Activated B cell treated with CpG ODN at 0.5 μM for 24 hours (primary cell): ENCODE measurements at regions of chr16 and their contacts with region 1.

Region 1: DNA sequence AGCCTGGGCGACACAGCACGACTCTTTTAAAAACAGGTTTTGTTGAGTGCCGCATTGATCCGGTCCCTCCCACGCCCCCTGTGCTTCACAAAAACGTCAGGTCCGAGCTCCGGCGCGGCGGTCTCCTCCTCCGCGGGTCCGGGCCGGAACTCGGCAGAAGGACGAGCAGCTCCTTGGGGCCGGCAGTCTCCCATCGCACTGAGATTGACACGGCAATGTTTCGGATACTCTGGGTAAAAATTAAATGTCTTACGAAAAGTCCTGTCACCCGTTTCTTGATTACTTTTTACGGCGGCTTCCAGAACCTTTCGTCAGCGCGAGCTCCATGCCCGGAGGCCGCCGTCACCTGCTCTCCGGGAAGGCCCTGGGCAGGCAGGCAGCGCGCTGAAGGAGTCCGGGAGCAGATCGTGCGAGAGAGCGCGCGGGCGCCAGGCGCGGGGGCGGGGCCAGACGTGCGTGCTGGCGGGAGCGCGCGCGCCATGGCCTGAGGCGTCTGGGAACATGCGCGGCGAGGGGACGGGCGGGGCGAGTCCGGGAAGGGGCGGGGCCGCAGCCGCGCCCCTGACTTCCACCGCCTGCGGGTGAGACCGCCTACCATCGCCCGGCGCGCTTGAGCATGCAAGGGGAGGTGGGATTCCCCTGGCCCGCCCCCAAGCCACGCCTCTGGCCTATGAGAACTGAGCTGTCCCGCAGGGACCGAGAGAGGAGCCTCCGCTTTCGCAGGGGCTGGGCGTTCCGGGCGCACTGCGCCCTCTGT is 11.7 kb upstream of the SRL start:
- DNase-seq: peak; percentile 98
- ATAC-seq: peak; percentile 96
- H3K4me3 Mint-ChIP-seq: peak overlapping the region; percentile 96
- H3K27ac Mint-ChIP-seq: peak overlapping the region; percentile 97
- H3K4me1 Mint-ChIP-seq: peaks cover 6% of the 10 kb centered on the region
- H3K27me3 Mint-ChIP-seq: no peaks in the 10 kb centered on the region
- CTCF ChIP-seq: no peak

Region 2: DNA sequence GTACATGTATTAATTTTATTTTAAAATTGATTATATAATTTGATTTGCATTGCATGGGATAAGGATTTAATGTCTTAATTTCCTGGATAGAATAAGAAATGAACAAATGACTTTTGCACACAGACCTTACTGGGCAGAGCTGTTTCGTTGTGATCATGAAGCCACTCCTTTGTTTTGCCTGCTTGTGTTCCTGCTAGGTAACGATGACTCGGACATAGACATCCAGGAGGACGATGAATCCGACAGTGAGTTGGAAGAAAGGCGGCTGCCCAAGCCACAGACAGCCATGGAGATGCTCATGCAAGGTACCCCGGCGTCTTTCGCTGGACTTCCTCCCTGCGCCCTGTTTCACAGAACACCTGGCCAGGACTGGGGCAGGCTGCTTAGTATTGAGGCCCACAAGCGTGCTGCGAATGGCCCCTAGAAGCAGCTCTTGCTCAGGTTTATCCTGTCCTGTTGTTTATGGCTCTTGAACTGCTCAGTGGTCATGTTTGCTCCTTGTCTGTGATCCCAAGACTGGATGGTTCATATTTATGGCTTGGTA is 723.1 kb before region 1 on chr16:
- CTCF ChIA-PET with region 1: interaction called, 7 read pairs
- POLR2A ChIA-PET with region 1: no interaction called
- intact Hi-C with region 1: loop called (anchors 2 kb)
- DNase-seq: no peak
- ATAC-seq: no peak
- H3K4me3 Mint-ChIP-seq: no peak overlapping the region
- H3K27ac Mint-ChIP-seq: no peak overlapping the region
- H3K4me1 Mint-ChIP-seq: peaks cover 21% of the 10 kb centered on the region
- H3K27me3 Mint-ChIP-seq: no peaks in the 10 kb centered on the region
- CTCF ChIP-seq: no peak

Region 3: DNA sequence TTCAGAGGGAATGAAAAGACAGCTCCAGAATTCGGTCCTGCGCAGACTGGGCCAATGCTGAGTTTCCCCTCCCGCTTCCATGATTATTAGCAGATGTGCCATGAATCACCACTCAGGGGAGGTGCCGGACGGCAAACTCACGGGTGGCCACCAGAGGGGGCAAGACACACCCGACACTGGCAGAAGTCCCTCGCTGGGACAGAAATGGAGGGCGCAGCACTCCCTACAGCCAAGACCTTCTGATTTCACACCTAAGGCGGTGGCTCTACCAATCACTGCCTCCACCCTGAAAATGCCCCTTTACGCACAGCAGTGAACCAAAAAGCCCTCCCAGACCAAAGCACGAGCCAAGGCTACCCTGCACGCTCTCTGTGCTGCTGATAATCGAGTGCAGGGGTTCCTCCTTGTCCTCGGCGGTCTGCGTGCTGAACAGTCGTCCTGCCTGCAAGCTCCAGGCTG is 563.1 kb before region 1 on chr16:
- CTCF ChIA-PET with region 1: no interaction called
- POLR2A ChIA-PET with region 1: no interaction called
- intact Hi-C with region 1: loop called (anchors 1 kb)
- DNase-seq: peak; percentile 74
- ATAC-seq: peak; percentile 100
- H3K4me3 Mint-ChIP-seq: no peak overlapping the region
- H3K27ac Mint-ChIP-seq: no peak overlapping the region
- H3K4me1 Mint-ChIP-seq: peaks cover 8% of the 10 kb centered on the region
- H3K27me3 Mint-ChIP-seq: no peaks in the 10 kb centered on the region
- CTCF ChIP-seq: peak; percentile 50

Region 4: DNA sequence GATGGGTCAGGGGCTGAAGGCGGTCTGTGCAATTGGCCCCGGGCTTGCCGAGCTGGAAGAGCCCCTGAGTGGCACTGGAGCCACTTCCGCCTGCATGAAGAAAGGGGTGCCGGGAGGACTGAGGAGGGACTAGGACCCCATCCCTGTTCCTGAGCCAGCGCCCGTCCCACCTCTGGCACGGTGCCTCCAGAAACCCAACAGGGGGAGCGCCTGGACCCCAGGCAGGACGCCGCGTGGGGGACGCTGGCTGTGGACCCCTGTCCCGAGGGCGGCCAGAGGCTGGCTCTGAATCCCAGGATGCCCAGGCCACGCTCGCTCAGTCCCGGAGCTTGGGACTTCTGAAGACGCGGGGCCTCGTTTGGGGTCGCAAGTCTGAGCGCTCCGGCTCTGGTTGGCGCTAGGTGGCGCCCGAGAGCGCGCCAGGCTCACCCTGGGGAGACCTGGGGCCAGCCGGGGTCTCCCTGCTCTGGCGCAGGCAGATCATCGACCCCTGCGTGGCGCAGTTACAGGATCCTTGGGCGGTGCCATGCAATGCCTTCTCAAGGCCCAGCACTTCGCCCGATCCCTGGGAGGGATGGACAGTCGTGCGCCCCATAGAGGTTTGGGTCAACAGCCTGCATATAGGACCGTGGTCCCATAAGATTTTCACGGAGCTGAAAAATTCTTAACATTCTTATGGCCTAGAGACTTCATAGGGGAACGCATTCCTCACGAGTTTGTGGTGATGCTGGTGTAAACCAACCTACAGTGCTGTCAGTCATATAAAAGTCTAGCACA is 314.5 kb before region 1 on chr16:
- CTCF ChIA-PET with region 1: interaction called, 11 read pairs
- POLR2A ChIA-PET with region 1: interaction called, 9 read pairs
- intact Hi-C with region 1: loop called (anchors 1 kb)
- DNase-seq: peak; percentile 68
- ATAC-seq: peak; percentile 81
- H3K4me3 Mint-ChIP-seq: no peak overlapping the region
- H3K27ac Mint-ChIP-seq: no peak overlapping the region
- H3K4me1 Mint-ChIP-seq: peaks cover 3% of the 10 kb centered on the region
- H3K27me3 Mint-ChIP-seq: peaks cover 4% of the 10 kb centered on the region
- CTCF ChIP-seq: peak; percentile 36

Region 5: GRCh38 chr16:4116337-4117249 is 137.0 kb before region 1 on chr16 and contains the start of gene ADCY9:
- CTCF ChIA-PET with region 1: interaction called, 3 read pairs
- POLR2A ChIA-PET with region 1: interaction called, 4 read pairs
- intact Hi-C with region 1: loop called (anchors 2 kb)
- DNase-seq: peak; percentile 73
- ATAC-seq: peak; percentile 84
- H3K4me3 Mint-ChIP-seq: peak within 1 kb of the TSS; percentile 82
- H3K27ac Mint-ChIP-seq: no peak within 1 kb of the TSS
- H3K4me1 Mint-ChIP-seq: peaks cover 8% of the 10 kb centered on the region
- H3K27me3 Mint-ChIP-seq: peaks cover 4% of the 10 kb centered on the region
- CTCF ChIP-seq: no peak
- total RNA-seq, gene ADCY9: 1.3 and 2.0 TPM in 2 replicates

Region 6: DNA sequence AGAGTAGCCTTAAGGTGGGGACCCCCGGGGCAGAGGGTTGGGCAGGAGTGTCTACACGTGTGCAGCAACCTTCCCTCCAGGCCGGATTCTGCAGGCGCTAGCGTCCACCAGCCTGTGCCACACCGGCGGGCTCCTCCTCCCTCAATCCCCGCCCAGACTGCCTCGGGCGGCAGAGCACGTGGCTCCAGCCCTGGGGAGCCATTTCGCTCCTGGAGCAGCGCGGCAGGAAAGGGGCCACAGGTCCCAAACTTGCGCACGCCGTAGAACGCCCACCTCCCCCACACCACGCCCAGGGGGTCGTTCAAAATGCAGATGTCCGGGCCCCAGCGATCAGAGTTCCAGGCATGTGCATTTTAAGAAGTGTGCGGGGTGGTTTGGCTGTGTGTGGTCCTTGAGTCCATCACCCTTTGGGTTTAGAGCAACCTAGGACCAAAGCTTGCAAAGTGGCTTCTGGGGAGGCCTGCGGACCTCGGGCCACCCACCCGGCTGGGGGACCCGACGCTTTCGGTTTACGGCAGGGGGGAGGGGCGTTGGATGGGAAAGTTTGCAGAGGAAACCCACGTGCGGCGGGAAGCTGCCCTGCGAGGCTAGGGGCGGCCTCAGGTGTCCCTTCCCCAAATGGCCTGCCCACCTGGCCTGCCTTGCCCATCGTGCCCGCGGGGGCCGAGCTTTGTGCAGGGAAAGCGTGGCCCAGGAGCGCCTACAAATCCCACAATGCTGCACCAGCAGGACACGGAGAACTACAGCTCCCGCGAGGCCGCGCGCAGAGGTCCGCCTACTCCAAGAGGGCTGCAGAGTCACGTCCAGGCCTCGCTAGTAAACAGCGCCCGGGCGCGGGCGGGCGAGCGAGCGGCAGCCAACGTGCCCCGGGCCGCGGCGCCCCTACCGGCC is 17.8 kb after region 1 on chr16:
- CTCF ChIA-PET with region 1: interaction called, 31 read pairs
- POLR2A ChIA-PET with region 1: interaction called, 78 read pairs
- intact Hi-C with region 1: loop called (anchors 1 kb)
- DNase-seq: peak; percentile 82
- ATAC-seq: peak; percentile 81
- H3K4me3 Mint-ChIP-seq: peak overlapping the region; percentile 86
- H3K27ac Mint-ChIP-seq: peak overlapping the region; percentile 88
- H3K4me1 Mint-ChIP-seq: peaks cover 11% of the 10 kb centered on the region
- H3K27me3 Mint-ChIP-seq: no peaks in the 10 kb centered on the region
- CTCF ChIP-seq: no peak

Region 7: GRCh38 chr16:4402439-4403132 is 149.0 kb after region 1 on chr16:
- CTCF ChIA-PET with region 1: interaction called, 10 read pairs
- POLR2A ChIA-PET with region 1: no interaction called
- intact Hi-C with region 1: loop called (anchors 1 kb)
- DNase-seq: peak; percentile 75
- ATAC-seq: peak; percentile 86
- H3K4me3 Mint-ChIP-seq: no peak overlapping the region
- H3K27ac Mint-ChIP-seq: no peak overlapping the region
- H3K4me1 Mint-ChIP-seq: peaks cover 2% of the 10 kb centered on the region
- H3K27me3 Mint-ChIP-seq: no peaks in the 10 kb centered on the region
- CTCF ChIP-seq: peak; percentile 59